Uterus (tissue), 4 donors: ENCODE measurements at regions of chr3 and their contacts with region 1.

Region 1: DNA sequence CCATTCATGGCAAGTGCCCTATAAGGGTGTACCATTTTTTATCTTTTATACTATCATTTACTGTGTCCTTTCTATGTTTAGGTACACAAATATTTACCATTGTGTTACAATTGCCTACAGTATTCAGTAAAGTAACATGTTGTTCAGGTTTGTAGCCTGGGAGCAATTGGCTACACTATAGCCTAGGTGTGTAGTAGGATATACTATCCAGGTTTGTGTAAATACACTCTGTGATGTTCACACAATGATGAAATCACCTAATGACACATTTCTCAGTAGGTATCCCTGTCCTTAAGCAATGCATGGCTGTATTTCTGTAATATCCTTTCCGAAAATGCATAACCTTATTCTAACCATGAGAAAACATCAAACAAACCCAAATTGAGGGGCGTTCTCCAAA is 17.9 kb upstream of the CNOT10 start:
- DNase-seq: no peak
- H3K4me3 ChIP-seq: no peak overlapping the region
- H3K27ac ChIP-seq: no peak overlapping the region
- H3K4me1 ChIP-seq: no peaks in the 10 kb centered on the region
- H3K27me3 ChIP-seq: no peaks in the 10 kb centered on the region
- CTCF ChIP-seq: no peak
- POLR2A ChIP-seq: no peak

Region 2: DNA sequence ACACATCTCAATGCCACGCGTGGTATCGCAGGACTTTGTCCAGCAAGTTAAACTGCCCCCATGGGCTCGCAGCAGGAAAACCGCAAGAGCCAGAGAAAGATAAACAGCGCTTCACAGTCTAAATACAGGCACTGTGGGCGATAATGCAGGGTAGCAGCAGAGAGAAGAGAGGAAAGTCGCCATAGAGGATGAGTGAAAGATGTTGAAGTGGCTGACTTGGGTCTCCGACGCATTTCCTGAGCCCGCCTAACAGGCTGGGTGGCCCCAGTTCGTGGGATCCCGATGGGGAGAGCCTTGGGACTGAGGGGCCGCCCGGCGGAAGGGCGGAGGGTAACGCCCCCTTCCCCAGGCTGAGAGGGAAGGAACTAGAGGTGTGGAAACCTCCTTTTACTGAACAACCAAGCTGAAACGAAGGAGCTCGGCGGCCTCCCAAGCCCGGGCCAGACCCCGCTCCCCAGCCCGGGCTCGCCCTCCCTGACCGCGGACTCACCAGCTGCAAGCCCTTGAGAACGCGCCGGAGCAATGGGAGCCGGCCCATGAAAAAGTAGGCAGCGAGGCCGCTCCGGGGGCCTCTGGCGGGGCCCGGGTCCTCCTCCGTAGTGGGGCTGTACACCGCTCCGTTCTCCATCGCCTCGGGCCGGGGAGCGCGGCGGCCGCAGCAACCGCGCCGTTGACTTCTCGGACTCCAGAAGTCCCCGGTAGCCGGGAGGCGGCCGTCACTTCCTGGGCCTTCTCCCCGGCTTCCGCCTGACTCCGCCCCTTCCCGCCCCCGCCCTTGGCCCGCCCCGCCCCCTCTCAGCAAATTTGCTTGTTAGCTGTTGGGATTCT is 164.8 kb before region 1 on chr3 and contains the start of gene CMTM6:
- intact Hi-C with region 1: loop called (anchors 10 kb)
- DNase-seq: peak; percentile 77
- H3K4me3 ChIP-seq: peak within 1 kb of the TSS; percentile 71 to 95
- H3K27ac ChIP-seq: peak within 1 kb of the TSS; percentile 93
- H3K4me1 ChIP-seq: no peaks in the 10 kb centered on the region
- H3K27me3 ChIP-seq: no peaks in the 10 kb centered on the region
- CTCF ChIP-seq: no peak
- POLR2A ChIP-seq: peak; percentile 62 to 67
- total RNA-seq, gene CMTM6: 12.8 to 118 (median 52.4) TPM

Region 3: DNA sequence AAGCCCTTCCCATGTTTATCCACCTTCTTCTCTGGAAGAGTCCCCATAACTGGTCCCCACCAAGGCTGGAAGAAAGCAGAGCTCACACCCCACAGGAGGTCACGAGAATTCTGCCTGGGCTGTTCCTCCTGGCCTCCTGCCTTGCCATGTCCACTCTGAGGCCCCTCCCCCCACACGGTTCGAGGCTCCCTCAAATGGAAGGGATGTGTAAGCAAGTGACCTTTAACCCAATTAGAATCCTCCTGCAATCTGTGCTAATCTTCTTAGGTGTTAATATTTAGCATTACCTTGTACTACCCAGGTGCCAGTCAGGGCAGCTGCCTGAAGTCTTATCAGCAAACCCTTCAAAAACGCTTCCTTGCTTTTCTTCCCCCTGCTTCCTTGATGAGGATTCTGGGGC is 64.1 kb before region 1 on chr3:
- intact Hi-C with region 1: no loop called
- DNase-seq: no peak
- H3K4me3 ChIP-seq: no peak overlapping the region
- H3K27ac ChIP-seq: no peak overlapping the region
- H3K4me1 ChIP-seq: no peaks in the 10 kb centered on the region
- H3K27me3 ChIP-seq: no peaks in the 10 kb centered on the region
- CTCF ChIP-seq: no peak
- POLR2A ChIP-seq: no peak